Keratinocyte (primary cell): ENCODE measurements at regions of chr6 and their contacts with region 1.

Region 1: GRCh38 chr6:88174906-88175305 is 8.8 kb upstream of the CNR1 start:
- DNase-seq: no peak
- H3K4me3 ChIP-seq: no peak overlapping the region
- H3K27ac ChIP-seq: no peak overlapping the region
- H3K4me1 ChIP-seq: no peaks in the 10 kb centered on the region
- H3K27me3 ChIP-seq: no peaks in the 10 kb centered on the region
- CTCF ChIP-seq: no peak

Region 2: DNA sequence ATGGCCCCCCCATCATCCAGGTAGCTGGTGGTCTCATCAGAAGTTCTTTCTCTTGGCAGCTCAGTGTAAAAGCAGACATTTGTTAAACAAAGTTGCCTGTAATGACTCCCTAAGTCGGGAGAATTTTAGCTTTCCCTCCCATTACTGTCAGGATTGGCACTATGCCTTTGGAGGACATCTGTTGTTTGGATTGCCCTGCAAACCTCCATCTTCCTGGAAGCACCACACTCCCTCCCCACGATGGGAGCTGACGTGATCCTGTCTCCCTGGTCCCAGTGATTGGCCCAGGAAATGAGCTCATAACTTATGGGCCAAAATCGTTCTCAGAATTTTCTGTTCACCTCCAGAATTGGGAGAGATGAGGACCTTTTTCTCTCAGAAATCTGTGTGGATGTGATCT is 33.8 kb after region 1 on chr6:
- dilution Hi-C with region 1: loop called (anchors 5 kb)
- DNase-seq: no peak
- H3K4me3 ChIP-seq: no peak overlapping the region
- H3K27ac ChIP-seq: no peak overlapping the region
- H3K4me1 ChIP-seq: no peaks in the 10 kb centered on the region
- H3K27me3 ChIP-seq: no peaks in the 10 kb centered on the region
- CTCF ChIP-seq: no peak

Region 3: GRCh38 chr6:89270951-89271721 is 1096.2 kb after region 1 on chr6:
- dilution Hi-C with region 1: no loop called
- DNase-seq: no peak
- H3K4me3 ChIP-seq: no peak overlapping the region
- H3K27ac ChIP-seq: no peak overlapping the region
- H3K4me1 ChIP-seq: no peaks in the 10 kb centered on the region
- H3K27me3 ChIP-seq: peaks cover 24% of the 10 kb centered on the region
- CTCF ChIP-seq: no peak